ENCODE measurements at regions of chr11 and their contacts with region 1.

Region 1: GRCh38 chr11:35077709-35078469 is 61.1 kb upstream of the CD44 start:
- DNase-seq: peak in 9 of 10 donors; percentile 30 to 88 (median 75)
- ATAC-seq: peak; percentile 68 to 77
- H3K4me3 Mint-ChIP-seq: peak overlapping the region; percentile 47 to 79 (median 72)
- H3K27ac Mint-ChIP-seq: peak overlapping the region; percentile 83 to 98 (median 95)
- H3K4me1 Mint-ChIP-seq: peaks cover 36 to 81% (median 76%) of the 10 kb centered on the region in 4 donors
- H3K27me3 Mint-ChIP-seq: no peaks in the 10 kb centered on the region

Region 2: DNA sequence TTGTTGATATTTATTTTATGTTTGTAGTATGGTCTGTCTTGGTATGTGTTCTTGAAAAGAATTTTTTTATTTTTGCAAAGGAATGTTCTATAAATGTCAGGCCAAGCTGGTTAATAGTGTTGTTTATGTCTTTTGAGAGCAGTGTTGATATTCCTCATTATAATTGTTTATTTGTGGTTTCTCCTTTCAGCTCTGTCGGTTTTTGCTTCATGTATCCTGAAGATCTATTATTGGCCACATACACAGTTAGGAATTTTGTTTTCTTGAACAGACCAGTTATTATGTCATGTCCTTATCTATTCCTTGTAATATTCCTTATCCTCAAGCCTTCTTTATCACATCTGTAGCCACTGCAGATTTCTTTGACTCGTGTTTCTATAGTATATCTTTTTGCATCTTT is 105.0 kb before region 1 on chr11:
- POLR2A ChIA-PET with region 1: no interaction called
- DNase-seq: no peak
- ATAC-seq: no peak
- H3K4me3 Mint-ChIP-seq: no peak overlapping the region
- H3K27ac Mint-ChIP-seq: no peak overlapping the region
- H3K4me1 Mint-ChIP-seq: peaks cover 10 to 23% (median 19%) of the 10 kb centered on the region in 4 donors
- H3K27me3 Mint-ChIP-seq: no peaks in the 10 kb centered on the region

Region 3: DNA sequence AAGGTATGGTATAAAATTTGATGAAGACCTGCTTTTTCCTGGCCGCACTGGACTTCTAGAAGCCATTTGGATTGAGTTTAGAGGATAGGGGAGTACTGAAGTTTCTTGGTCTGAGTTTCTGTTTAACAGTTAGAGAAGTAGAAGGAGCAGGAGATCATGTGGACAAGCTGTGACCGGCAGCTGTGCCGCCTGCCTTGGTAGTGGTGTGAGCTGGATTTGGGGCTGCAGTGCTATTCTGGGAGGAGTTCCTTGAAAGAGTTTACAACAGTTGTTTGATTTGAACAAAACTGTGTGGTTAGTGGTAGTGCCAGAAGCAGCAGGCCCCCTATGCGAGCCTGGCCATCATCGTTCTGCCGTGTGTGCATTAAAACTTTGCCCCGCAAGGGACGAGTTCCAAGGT is 56.3 kb before region 1 on chr11:
- POLR2A ChIA-PET with region 1: no interaction called
- DNase-seq: no peak
- ATAC-seq: no peak
- H3K4me3 Mint-ChIP-seq: no peak overlapping the region
- H3K27ac Mint-ChIP-seq: no peak overlapping the region
- H3K4me1 Mint-ChIP-seq: peaks cover 0 to 8% (median 3%) of the 10 kb centered on the region in 4 donors
- H3K27me3 Mint-ChIP-seq: no peaks in the 10 kb centered on the region

Region 4: DNA sequence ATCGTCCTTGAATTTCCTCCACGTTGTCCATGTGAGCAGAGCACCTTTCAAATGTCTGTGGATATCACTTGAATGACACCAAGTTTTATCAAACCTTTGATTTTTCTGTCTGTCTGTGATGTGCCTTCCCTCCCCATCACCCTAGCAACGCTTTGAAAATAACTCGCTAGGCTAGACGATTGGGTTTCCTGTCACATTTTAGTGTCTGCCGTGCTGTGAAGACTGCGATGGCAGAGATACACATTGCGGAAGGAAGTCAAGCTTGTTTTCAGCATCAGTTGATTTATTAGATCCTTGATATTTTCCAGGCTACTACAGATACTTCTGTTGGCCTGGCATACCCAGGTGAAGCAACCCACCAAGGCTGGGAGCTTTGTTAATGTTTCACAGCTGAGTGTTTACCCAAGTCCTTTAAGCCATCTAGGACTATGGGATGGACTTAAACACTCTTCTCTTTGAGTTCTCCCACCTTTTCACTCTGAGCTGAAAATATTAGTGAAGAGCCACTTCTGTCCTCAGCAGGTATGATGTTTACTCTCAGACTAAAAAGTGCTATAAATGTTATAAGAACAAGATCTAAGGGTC is 32.6 kb before region 1 on chr11:
- POLR2A ChIA-PET with region 1: interaction called, 22 read pairs
- DNase-seq: peak; percentile 40 to 95 (median 86)
- ATAC-seq: peak; percentile 70 to 82
- H3K4me3 Mint-ChIP-seq: peak overlapping the region; percentile 70 to 96 (median 88)
- H3K27ac Mint-ChIP-seq: peak overlapping the region; percentile 97 to 100 (median 100)
- H3K4me1 Mint-ChIP-seq: peaks cover 31 to 92% (median 78%) of the 10 kb centered on the region in 4 donors
- H3K27me3 Mint-ChIP-seq: no peaks in the 10 kb centered on the region

Region 5: GRCh38 chr11:35066783-35067423 is 11.0 kb before region 1 on chr11:
- POLR2A ChIA-PET with region 1: interaction called, 11 read pairs
- DNase-seq: no peak
- ATAC-seq: peak; percentile 79 to 86
- H3K4me3 Mint-ChIP-seq: peak overlapping the region in 9 of 10 donors; percentile 12 to 50 (median 36)
- H3K27ac Mint-ChIP-seq: peak overlapping the region; percentile 21 to 88 (median 70)
- H3K4me1 Mint-ChIP-seq: peaks cover 22 to 38% (median 32%) of the 10 kb centered on the region in 4 donors
- H3K27me3 Mint-ChIP-seq: no peaks in the 10 kb centered on the region

Region 6: DNA sequence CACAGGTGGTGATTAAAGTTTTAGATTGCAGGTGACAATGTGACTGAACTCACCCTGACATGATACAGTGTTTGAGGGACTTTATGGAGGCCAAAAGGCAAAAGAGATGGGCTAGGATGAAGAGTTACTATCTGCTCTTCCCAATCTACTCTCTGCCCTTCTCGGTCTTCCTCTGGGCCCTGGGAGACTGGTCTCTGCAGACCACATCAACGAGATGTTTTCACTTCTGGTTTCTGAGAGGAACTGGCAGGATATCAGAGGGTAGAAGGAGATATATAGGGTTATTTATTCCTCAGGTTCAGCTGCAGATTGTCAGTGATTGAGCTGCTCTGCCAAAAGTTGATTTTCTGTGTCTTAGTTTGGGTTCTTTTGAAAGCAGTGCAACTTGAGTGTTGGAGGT is 28.7 kb after region 1 on chr11:
- POLR2A ChIA-PET with region 1: no interaction called
- DNase-seq: peak in 2 of 10 donors; percentile 35 to 36
- ATAC-seq: peak; percentile 81 to 87
- H3K4me3 Mint-ChIP-seq: peak overlapping the region in 9 of 10 donors; percentile 12 to 78 (median 70)
- H3K27ac Mint-ChIP-seq: peak overlapping the region; percentile 52 to 95 (median 88)
- H3K4me1 Mint-ChIP-seq: peaks cover 44 to 67% (median 60%) of the 10 kb centered on the region in 4 donors
- H3K27me3 Mint-ChIP-seq: no peaks in the 10 kb centered on the region